ENCODE measurements at regions of chr1 and their contacts with region 1.

Region 1: DNA sequence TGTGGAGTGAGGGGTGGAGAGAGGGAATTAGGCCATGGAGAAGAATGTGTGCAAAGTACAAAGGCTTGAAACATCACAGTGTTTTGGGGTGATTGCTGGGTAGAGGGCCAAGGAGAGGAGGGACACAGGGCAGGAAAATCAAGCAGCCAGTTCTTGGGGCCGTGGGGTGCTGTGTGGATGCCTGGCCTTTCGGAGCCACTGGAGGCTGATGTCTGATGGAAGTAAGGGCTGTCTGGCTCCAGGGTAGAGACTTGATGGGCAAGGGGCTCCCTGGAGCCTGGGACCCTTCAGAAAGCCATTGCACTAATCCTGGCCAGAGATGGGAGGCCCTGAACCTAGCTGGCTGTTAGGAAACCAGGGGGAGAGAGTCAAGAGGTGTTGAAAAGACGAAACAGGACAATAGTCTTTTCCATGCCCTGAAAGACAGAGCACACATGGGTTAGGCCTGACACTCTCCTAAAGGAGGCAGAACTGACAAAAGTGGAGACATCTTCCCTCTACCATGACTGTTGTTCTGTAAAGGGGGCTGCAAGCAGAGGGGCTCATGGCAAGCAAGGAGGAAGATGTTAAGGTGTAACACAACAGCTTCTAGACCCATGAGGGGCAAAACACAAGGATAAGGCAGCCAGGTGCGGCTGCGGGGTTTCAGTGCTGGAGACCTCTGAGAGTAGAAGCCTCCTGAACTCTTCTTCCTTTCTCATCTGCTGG is 21.0 kb downstream of the ATF3 start:
- DNase-seq: no peak
- H3K4me3 ChIP-seq: no peak overlapping the region
- H3K27ac ChIP-seq: no peak overlapping the region
- H3K4me1 ChIP-seq: peaks cover 0 to 10% of the 10 kb centered on the region in 2 donors
- H3K27me3 ChIP-seq: no peaks in the 10 kb centered on the region
- CTCF ChIP-seq: no peak
- POLR2A ChIP-seq: no peak

Region 2: DNA sequence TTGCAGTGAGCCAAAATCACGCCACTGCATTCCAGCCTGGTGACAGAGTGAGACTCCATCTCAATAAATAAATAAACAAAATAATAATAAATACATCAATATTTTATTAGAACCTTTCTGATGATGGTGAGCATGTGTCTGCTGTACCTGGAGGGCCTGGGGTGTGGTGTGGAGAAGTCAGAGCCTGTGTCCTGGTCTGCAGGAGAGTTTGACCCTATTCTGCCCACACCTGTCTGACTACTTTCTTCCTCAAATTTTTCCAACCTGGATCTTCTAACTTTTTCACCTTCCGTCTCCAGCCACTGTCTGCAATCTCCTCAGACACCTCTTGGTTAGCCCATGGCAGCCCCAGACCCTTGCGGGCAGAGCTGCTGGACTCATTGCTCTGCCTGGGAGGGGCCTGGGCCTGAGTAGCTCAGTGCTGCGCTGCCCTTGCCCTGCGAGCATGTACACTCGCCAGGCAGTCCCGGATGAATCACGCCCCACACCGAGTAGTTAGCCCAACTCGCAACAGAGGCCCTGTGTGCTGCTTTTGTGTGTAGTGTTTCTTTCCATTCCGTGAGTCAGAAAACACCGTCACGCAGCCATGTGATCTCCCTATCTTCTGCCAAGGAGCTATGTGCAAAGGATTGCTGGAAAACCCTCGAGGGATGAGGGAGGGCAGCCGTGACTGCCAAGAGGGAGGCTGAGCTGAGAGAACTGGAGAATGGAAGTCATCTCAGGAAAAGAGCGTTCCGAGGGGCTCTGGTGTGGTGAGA is 159.7 kb before region 1 on chr1:
- intact Hi-C with region 1: loop called (anchors 5 kb)
- DNase-seq: peak; percentile 56 to 83
- H3K4me3 ChIP-seq: no peak overlapping the region
- H3K27ac ChIP-seq: peak overlapping the region; percentile 30 to 68 (median 57)
- H3K4me1 ChIP-seq: peaks cover 3 to 19% of the 10 kb centered on the region in 2 donors
- H3K27me3 ChIP-seq: no peaks in the 10 kb centered on the region
- CTCF ChIP-seq: no peak
- POLR2A ChIP-seq: peak in 1 of 2 donors; percentile 39

Region 3: GRCh38 chr1:212514056-212514614 is 115.5 kb before region 1 on chr1:
- intact Hi-C with region 1: no loop called
- DNase-seq: peak; percentile 69 to 79
- H3K4me3 ChIP-seq: no peak overlapping the region
- H3K27ac ChIP-seq: no peak overlapping the region
- H3K4me1 ChIP-seq: peaks cover 12 to 31% of the 10 kb centered on the region in 2 donors
- H3K27me3 ChIP-seq: no peaks in the 10 kb centered on the region
- CTCF ChIP-seq: no peak
- POLR2A ChIP-seq: peak in 1 of 2 donors; percentile 14

Region 4: GRCh38 chr1:212665241-212666115 is 35.9 kb after region 1 on chr1:
- intact Hi-C with region 1: no loop called
- DNase-seq: peak; percentile 74 to 80
- H3K4me3 ChIP-seq: peak overlapping the region in 2 of 3 donors; percentile 23 to 31
- H3K27ac ChIP-seq: no peak overlapping the region
- H3K4me1 ChIP-seq: peaks cover 0 to 11% of the 10 kb centered on the region in 2 donors
- H3K27me3 ChIP-seq: no peaks in the 10 kb centered on the region
- CTCF ChIP-seq: peak; percentile 76 to 94 (median 88)
- POLR2A ChIP-seq: no peak

Region 5: GRCh38 chr1:212712451-212713303 is 83.1 kb after region 1 on chr1:
- intact Hi-C with region 1: no loop called
- DNase-seq: no peak
- H3K4me3 ChIP-seq: no peak overlapping the region
- H3K27ac ChIP-seq: no peak overlapping the region
- H3K4me1 ChIP-seq: no peaks in the 10 kb centered on the region
- H3K27me3 ChIP-seq: no peaks in the 10 kb centered on the region
- CTCF ChIP-seq: no peak
- POLR2A ChIP-seq: no peak

Measured in thyroid gland (tissue), 4 donors.